CD4-positive, alpha-beta memory T cell (primary cell): ENCODE measurements at regions of chr5 and their contacts with region 1.

Region 1: DNA sequence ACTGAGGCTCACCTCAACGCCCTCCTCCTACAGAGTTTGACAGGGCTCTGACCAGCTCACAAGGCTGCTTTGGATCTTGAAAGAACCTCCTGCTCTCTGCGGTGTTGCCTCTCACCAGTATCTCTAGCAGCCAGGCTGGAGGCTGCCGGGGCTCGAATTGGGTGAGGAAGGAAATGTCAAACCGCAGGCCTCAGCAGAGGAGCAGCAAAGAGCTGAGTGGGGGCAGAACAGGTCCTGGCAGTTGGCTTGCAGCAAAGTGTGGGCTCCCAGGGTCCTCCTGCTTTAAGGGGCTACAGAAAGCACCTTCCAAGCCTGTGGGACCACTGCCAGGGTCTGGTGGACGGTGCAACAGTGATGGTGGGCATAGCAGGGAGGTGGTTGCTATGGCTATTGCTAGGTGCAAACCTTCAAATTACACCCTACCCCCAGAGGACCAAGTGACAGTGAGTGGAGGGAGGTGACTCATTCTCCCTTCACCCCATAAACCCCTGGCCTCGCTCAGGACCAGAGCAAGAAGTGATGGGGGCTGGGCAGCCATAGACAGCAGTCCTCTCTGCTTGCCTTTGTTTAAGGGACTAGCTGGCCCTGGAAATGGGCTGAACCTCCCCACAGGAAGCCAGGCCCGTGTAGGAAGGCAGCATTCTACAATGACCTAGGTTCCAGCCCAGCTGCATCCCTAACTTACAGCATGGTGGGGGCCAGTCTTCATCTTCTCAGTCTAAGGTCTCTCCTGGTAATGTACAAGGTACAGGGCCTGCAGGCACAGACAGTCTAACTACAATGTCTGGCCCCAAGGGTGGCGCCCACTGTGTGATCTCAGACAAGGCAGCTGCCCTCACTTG is 18.7 kb downstream of the LCP2 start:
- DNase-seq: peak; percentile 90 to 96 (median 91)
- H3K4me3 ChIP-seq: peak overlapping the region in 1 of 2 donors; percentile 15
- H3K4me3 Mint-ChIP-seq: peak overlapping the region; percentile 75 to 92 (median 85)
- H3K27ac ChIP-seq: peak overlapping the region; percentile 68
- H3K27ac Mint-ChIP-seq: peak overlapping the region; percentile 91 to 100 (median 96)
- H3K4me1 ChIP-seq: peaks cover 95% of the 10 kb centered on the region
- H3K4me1 Mint-ChIP-seq: peaks cover 83 to 100% (median 93%) of the 10 kb centered on the region in 4 donors
- H3K27me3 ChIP-seq: no peaks in the 10 kb centered on the region
- H3K27me3 Mint-ChIP-seq: no peaks in the 10 kb centered on the region

Region 2: GRCh38 chr5:170247363-170247762 is 31.5 kb before region 1 on chr5:
- CTCF ChIA-PET with region 1: interaction called, 4 read pairs
- POLR2A ChIA-PET with region 1: interaction called, 12 read pairs
- intact Hi-C with region 1: no loop called
- DNase-seq: no peak
- H3K4me3 ChIP-seq: no peak overlapping the region
- H3K4me3 Mint-ChIP-seq: no peak overlapping the region
- H3K27ac ChIP-seq: no peak overlapping the region
- H3K27ac Mint-ChIP-seq: no peak overlapping the region
- H3K4me1 ChIP-seq: peaks cover 9% of the 10 kb centered on the region
- H3K4me1 Mint-ChIP-seq: peaks cover 4 to 16% (median 7%) of the 10 kb centered on the region in 4 donors
- H3K27me3 ChIP-seq: no peaks in the 10 kb centered on the region
- H3K27me3 Mint-ChIP-seq: no peaks in the 10 kb centered on the region

Region 3: DNA sequence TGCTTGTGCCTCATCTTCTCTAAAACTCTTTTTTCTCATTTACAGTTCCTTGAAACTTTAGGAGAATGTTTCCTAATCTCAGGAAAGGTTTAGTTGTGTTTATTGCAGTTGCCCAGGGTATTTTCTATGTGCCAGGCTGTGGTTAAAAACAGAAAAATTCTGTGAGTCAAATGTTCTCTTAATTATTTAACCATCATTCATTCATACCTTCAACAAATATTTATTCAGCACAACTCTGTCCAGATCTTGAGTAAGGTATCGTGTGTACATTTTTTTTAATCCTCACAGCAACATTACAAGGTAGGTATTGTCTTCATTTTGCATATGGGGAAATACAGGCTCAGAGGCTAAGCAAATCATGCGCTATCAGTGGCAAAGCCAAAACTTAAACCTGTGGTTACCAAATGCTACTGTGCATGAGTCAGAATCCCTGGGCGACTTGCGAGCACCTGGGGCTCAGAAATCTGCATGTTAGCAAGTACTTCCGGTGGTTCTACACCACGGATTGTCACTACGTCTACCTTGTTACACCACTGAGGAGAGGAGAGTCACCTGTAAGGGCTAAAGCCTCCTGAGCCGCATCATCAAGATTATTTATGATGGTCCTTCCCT is 24.9 kb before region 1 on chr5:
- CTCF ChIA-PET with region 1: interaction called, 5 read pairs
- POLR2A ChIA-PET with region 1: interaction called, 12 read pairs
- intact Hi-C with region 1: no loop called
- DNase-seq: peak; percentile 72 to 93 (median 79)
- H3K4me3 ChIP-seq: no peak overlapping the region
- H3K4me3 Mint-ChIP-seq: peak overlapping the region in 7 of 8 donors; percentile 2 to 78 (median 11)
- H3K27ac ChIP-seq: peak overlapping the region; percentile 60
- H3K27ac Mint-ChIP-seq: peak overlapping the region; percentile 82 to 97 (median 92)
- H3K4me1 ChIP-seq: peaks cover 51% of the 10 kb centered on the region
- H3K4me1 Mint-ChIP-seq: peaks cover 27 to 59% (median 42%) of the 10 kb centered on the region in 4 donors
- H3K27me3 ChIP-seq: no peaks in the 10 kb centered on the region
- H3K27me3 Mint-ChIP-seq: no peaks in the 10 kb centered on the region

Region 4: GRCh38 chr5:170262061-170263045 is 16.5 kb before region 1 on chr5:
- CTCF ChIA-PET with region 1: interaction called, 137 read pairs
- POLR2A ChIA-PET with region 1: interaction called, 116 read pairs
- intact Hi-C with region 1: loop called (anchors 2 kb)
- DNase-seq: peak; percentile 77 to 85 (median 80)
- H3K4me3 ChIP-seq: peak overlapping the region; percentile 4 to 28
- H3K4me3 Mint-ChIP-seq: peak overlapping the region; percentile 59 to 82 (median 72)
- H3K27ac ChIP-seq: peak overlapping the region; percentile 67
- H3K27ac Mint-ChIP-seq: peak overlapping the region; percentile 82 to 98 (median 95)
- H3K4me1 ChIP-seq: peaks cover 80% of the 10 kb centered on the region
- H3K4me1 Mint-ChIP-seq: peaks cover 51 to 89% (median 74%) of the 10 kb centered on the region in 4 donors
- H3K27me3 ChIP-seq: no peaks in the 10 kb centered on the region
- H3K27me3 Mint-ChIP-seq: no peaks in the 10 kb centered on the region

Region 5: DNA sequence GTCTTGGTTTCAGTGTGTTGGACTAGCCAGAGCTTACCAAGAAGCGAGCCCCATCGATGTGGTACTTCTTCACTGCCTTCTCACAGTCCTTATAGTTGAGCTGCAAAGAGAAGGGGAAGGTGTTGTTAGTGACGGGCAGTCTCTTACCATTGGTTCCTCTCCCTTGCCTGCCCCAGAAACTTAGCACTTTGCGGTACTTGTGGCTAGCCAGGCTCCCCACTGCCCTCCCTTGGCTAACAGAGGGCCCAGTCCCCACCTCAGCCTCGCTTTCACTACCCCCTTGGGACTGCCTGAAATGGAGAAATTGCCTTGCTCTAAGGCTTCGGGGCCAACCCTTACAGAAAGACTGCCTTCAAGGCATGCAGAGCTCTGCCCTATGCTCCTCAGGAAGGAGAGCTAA is 14.4 kb after region 1 on chr5:
- CTCF ChIA-PET with region 1: interaction called, 384 read pairs
- POLR2A ChIA-PET with region 1: interaction called, 1,265 read pairs
- intact Hi-C with region 1: loop called (anchors 1 kb)
- DNase-seq: peak in 4 of 5 donors; percentile 47 to 77 (median 50)
- H3K4me3 ChIP-seq: peak overlapping the region; percentile 33 to 97
- H3K4me3 Mint-ChIP-seq: peak overlapping the region; percentile 95 to 99 (median 98)
- H3K27ac ChIP-seq: peak overlapping the region; percentile 90
- H3K27ac Mint-ChIP-seq: peak overlapping the region; percentile 87 to 100 (median 96)
- H3K4me1 ChIP-seq: peaks cover 76% of the 10 kb centered on the region
- H3K4me1 Mint-ChIP-seq: peaks cover 59 to 100% (median 67%) of the 10 kb centered on the region in 4 donors
- H3K27me3 ChIP-seq: no peaks in the 10 kb centered on the region
- H3K27me3 Mint-ChIP-seq: no peaks in the 10 kb centered on the region

Region 6: GRCh38 chr5:170302653-170303501 is 24.0 kb after region 1 on chr5:
- CTCF ChIA-PET with region 1: interaction called, 384 read pairs
- POLR2A ChIA-PET with region 1: interaction called, 1,265 read pairs
- intact Hi-C with region 1: loop called (anchors 1 kb)
- DNase-seq: peak; percentile 85 to 91 (median 88)
- H3K4me3 ChIP-seq: peak overlapping the region; percentile 50 to 63
- H3K4me3 Mint-ChIP-seq: peak overlapping the region; percentile 77 to 97 (median 88)
- H3K27ac ChIP-seq: peak overlapping the region; percentile 82
- H3K27ac Mint-ChIP-seq: peak overlapping the region; percentile 88 to 99 (median 97)
- H3K4me1 ChIP-seq: peaks cover 69% of the 10 kb centered on the region
- H3K4me1 Mint-ChIP-seq: peaks cover 39 to 87% (median 67%) of the 10 kb centered on the region in 4 donors
- H3K27me3 ChIP-seq: no peaks in the 10 kb centered on the region
- H3K27me3 Mint-ChIP-seq: no peaks in the 10 kb centered on the region

Region 7: DNA sequence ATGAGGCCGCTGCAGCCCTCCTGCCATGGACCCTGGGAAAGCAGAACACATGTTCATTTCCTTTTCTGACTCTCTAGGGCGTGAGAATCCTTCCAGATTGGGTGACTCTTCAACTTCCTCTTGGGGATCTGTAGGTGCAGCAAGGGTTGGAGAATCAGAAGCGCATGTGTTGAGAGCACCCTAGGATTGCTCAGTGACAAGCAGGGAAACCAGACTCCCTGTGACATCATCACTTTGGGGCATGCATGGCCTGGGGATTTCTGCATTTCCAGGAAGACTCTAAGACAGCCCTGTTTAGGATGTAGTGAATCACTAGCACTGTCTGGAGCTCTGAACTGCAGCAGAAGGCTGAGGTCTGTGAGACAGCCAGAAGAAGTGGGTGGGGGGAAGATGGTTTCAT is 33.8 kb after region 1 on chr5:
- CTCF ChIA-PET with region 1: interaction called, 12 read pairs
- POLR2A ChIA-PET with region 1: interaction called, 1,265 read pairs
- intact Hi-C with region 1: no loop called
- DNase-seq: peak in 2 of 5 donors; percentile 39 to 93
- H3K4me3 ChIP-seq: peak overlapping the region; percentile 3 to 42
- H3K4me3 Mint-ChIP-seq: peak overlapping the region; percentile 63 to 91 (median 76)
- H3K27ac ChIP-seq: peak overlapping the region; percentile 59
- H3K27ac Mint-ChIP-seq: peak overlapping the region; percentile 84 to 97 (median 96)
- H3K4me1 ChIP-seq: peaks cover 48% of the 10 kb centered on the region
- H3K4me1 Mint-ChIP-seq: peaks cover 41 to 69% (median 49%) of the 10 kb centered on the region in 4 donors
- H3K27me3 ChIP-seq: no peaks in the 10 kb centered on the region
- H3K27me3 Mint-ChIP-seq: no peaks in the 10 kb centered on the region

Region 8: GRCh38 chr5:170565072-170565471 is 286.2 kb after region 1 on chr5:
- CTCF ChIA-PET with region 1: no interaction called
- POLR2A ChIA-PET with region 1: no interaction called
- intact Hi-C with region 1: no loop called
- DNase-seq: no peak
- H3K4me3 ChIP-seq: no peak overlapping the region
- H3K4me3 Mint-ChIP-seq: no peak overlapping the region
- H3K27ac ChIP-seq: no peak overlapping the region
- H3K27ac Mint-ChIP-seq: no peak overlapping the region
- H3K4me1 ChIP-seq: no peaks in the 10 kb centered on the region
- H3K4me1 Mint-ChIP-seq: peaks cover 0 to 1% (median 0%) of the 10 kb centered on the region in 4 donors
- H3K27me3 ChIP-seq: peaks cover 6% of the 10 kb centered on the region
- H3K27me3 Mint-ChIP-seq: peaks cover 23 to 30% of the 10 kb centered on the region in 2 donors